Activated CD4-positive, alpha-beta T cell treated with anti-CD3 and anti-CD28 coated beads, Interleukin-2, amount 10 ng/mL, durations not matched to agents 24 days and 14 days (primary cell): ENCODE measurements at regions of chr7 and their contacts with region 1.

Region 1: GRCh38 chr7:26090927-26091519 is 61.0 kb upstream of the NFE2L3 start:
- DNase-seq: peak; percentile 75
- H3K4me3 Mint-ChIP-seq: peak overlapping the region; percentile 26
- H3K27ac Mint-ChIP-seq: peak overlapping the region; percentile 16
- H3K4me1 Mint-ChIP-seq: peaks cover 19% of the 10 kb centered on the region
- H3K27me3 Mint-ChIP-seq: peaks cover 3% of the 10 kb centered on the region

Region 2: GRCh38 chr7:26034391-26034790 is 56.6 kb before region 1 on chr7:
- intact Hi-C with region 1: no loop called
- DNase-seq: no peak
- H3K4me3 Mint-ChIP-seq: no peak overlapping the region
- H3K27ac Mint-ChIP-seq: no peak overlapping the region
- H3K4me1 Mint-ChIP-seq: peaks cover 9% of the 10 kb centered on the region
- H3K27me3 Mint-ChIP-seq: peaks cover 18% of the 10 kb centered on the region

Region 3: GRCh38 chr7:26187380-26188205 is 96.6 kb after region 1 on chr7:
- intact Hi-C with region 1: loop called (anchors 2 kb)
- DNase-seq: no peak
- H3K4me3 Mint-ChIP-seq: peak overlapping the region; percentile 12
- H3K27ac Mint-ChIP-seq: peak overlapping the region; percentile 85
- H3K4me1 Mint-ChIP-seq: peaks cover 61% of the 10 kb centered on the region
- H3K27me3 Mint-ChIP-seq: no peaks in the 10 kb centered on the region

Region 4: DNA sequence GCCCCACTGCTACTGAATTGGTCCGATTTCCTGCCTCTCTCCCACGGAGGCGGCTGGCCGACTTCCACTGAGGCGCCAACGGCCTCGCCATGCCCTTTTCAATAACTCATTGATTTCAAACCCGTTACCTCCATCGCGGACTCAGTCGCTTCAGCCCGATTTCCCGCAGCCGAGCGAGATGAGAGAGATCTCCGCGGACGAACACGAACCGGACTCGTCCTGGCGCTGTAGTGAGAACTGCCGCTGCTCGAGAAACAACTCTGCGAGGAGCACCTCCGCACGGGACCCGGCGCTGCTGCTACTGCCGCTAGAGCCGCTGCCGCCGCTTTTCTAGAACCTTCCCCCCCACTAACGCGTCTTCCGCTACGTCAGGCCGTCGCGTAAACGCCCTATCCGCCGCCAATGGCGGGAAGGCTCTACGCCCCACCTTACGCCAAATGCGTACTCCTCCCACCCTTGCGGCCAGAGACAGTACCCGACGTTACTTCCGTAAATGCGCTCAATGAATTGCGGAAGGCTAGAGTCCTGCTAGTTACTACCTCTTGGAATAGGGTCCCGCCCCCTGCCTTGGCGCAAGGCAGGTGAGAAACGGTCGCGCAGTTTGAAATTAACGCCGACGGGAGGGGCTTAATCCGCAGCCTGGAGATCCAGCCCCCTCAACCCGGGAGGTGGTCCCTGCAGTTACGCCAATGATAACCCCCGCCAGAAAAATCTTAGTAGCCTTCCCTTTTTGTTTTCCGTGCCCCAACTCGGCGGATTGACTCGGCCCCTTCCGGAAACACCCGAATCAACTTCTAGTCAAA is 109.6 kb after region 1 on chr7 and contains the start of gene HNRNPA2B1:
- intact Hi-C with region 1: loop called (anchors 1 kb)
- DNase-seq: peak; percentile 100
- H3K4me3 Mint-ChIP-seq: peak within 1 kb of the TSS; percentile 100
- H3K27ac Mint-ChIP-seq: peak within 1 kb of the TSS; percentile 99
- H3K4me1 Mint-ChIP-seq: peaks cover 51% of the 10 kb centered on the region
- H3K27me3 Mint-ChIP-seq: peaks cover 7% of the 10 kb centered on the region
- total RNA-seq, gene HNRNPA2B1: 862 and 873 TPM in 2 replicates

Region 5: DNA sequence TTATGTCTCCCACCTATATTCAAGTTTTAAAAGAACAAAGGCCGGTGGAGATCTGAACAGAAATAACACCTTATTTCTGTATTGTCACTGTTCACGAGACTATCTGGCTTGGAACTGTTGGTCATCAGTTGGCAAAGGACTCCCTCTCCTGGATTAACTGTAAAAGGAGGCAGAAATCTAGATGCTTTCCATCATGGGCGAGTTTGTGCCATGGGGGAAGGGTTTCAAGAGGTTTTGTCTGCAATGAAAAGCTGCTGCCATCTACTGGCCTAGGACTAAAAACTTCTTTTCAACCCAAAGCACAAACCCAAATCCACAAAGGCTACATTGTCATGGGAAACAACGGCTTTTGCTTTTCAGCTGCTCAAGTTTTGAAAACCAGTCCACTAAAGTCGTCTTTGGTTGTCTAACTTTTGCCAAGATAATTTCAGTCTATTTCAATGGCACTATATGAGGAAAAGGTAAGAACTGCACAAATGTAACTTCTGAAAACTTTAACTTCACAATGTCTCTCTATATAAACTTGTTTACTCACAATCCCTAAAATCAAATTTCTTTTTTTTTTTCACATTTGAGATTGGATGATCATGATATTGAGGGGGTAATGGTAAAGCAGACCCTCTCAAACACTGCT is 576.6 kb after region 1 on chr7:
- intact Hi-C with region 1: loop called (anchors 2 kb)
- DNase-seq: peak; percentile 89
- H3K4me3 Mint-ChIP-seq: no peak overlapping the region
- H3K27ac Mint-ChIP-seq: no peak overlapping the region
- H3K4me1 Mint-ChIP-seq: peaks cover 10% of the 10 kb centered on the region
- H3K27me3 Mint-ChIP-seq: peaks cover 40% of the 10 kb centered on the region